CD4-positive, alpha-beta memory T cell (primary cell): ENCODE measurements at regions of chr2 and their contacts with region 1.

Region 1: DNA sequence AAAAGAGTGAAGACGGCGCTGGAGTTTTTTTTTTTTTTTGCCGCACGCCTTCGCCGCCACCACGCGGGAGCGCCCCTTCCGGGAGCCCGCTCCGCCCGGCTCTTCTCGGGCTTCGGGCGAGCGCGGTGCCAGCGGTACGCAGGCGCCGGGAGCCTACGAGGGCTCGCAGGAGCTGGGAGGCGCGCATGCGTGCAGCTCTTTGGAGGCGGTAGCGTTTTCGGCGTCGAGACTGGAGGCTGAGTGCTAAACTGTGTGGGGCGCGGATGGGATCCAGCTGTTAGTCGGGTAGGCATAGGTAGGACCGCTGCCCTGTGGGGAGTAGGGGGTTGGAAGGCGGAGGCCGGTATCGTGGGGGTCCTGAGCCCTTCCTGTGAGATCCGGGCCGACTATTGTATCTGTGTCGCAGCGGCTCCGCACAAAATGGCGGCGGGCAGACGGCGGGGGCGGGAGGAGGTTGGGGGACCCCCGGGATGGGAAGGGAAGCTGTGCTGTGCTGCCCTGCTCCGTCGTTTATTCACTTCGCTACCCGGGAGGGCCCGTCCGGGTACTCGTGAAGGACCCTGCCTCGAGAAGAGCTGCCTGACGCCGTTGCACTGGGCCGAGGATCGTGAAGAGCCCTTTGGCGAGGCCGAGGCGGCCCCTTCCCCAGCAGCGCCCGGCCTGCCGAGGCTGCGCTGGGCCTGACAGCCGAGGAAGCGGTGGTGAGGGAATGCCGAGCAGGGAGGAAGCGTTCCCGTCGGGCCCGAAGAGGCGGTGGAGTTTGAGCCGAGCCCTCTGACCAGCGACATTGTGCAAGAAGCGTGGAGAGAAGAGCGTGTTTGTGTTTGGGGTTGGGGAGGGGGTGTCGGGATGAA is at the start of gene ZNF638:
- DNase-seq: peak; percentile 92 to 94 (median 93)
- H3K4me3 ChIP-seq: peak within 1 kb of the TSS; percentile 70 to 76
- H3K4me3 Mint-ChIP-seq: peak within 1 kb of the TSS; percentile 98 to 100 (median 100)
- H3K27ac ChIP-seq: peak within 1 kb of the TSS; percentile 95
- H3K27ac Mint-ChIP-seq: peak within 1 kb of the TSS; percentile 98 to 100 (median 100)
- H3K4me1 ChIP-seq: peaks cover 51% of the 10 kb centered on the region
- H3K4me1 Mint-ChIP-seq: peaks cover 23 to 53% (median 35%) of the 10 kb centered on the region in 4 donors
- H3K27me3 ChIP-seq: no peaks in the 10 kb centered on the region
- H3K27me3 Mint-ChIP-seq: no peaks in the 10 kb centered on the region
- total RNA-seq, gene ZNF638: 167 TPM

Region 2: GRCh38 chr2:70690846-70691245 is 641.0 kb before region 1 on chr2:
- CTCF ChIA-PET with region 1: no interaction called
- POLR2A ChIA-PET with region 1: no interaction called
- intact Hi-C with region 1: no loop called
- DNase-seq: no peak
- H3K4me3 ChIP-seq: no peak overlapping the region
- H3K4me3 Mint-ChIP-seq: no peak overlapping the region
- H3K27ac ChIP-seq: no peak overlapping the region
- H3K27ac Mint-ChIP-seq: no peak overlapping the region
- H3K4me1 ChIP-seq: no peaks in the 10 kb centered on the region
- H3K4me1 Mint-ChIP-seq: no peaks in the 10 kb centered on the region
- H3K27me3 ChIP-seq: no peaks in the 10 kb centered on the region
- H3K27me3 Mint-ChIP-seq: peaks cover 7 to 17% of the 10 kb centered on the region in 2 donors

Region 3: DNA sequence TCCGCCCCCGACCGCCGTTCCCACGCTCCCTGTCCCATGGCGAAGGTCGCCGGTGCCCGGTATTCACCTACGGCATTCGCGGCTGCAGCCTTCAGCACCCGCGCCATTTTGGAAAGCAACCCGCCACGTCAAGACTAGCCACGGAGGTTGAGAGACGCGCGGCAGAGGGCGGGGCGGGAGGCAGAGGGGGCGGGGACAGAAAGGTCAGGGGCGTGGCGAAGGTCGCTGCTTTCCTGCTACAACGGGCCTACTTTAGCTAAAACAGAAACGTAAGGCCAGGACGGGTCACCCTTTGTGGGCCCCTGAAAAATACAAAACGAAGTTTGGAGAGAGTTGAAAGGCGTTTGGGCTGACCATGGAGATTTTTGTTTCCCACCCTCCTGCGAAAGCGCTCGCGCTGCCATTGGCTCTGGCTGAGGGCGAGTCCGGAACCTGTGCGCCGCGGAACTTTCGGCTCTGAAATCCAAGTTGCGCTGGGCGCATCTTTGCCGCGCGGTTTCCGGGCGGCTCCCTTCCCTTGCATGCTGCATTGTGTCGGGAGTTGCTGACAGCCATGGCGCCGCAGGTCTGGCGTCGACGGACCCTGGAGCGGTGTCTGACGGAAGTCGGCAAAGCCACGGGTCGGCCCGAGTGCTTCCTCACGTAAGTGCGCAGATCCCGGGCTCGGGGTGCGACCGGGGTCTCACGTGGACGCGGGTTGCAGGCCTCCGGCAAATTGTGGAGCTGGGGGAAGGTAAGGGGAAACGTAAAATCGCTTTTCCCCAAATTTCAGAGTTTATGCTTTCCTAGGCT is 201.5 kb before region 1 on chr2 and contains the starts of genes MCEE and MPHOSPH10:
- CTCF ChIA-PET with region 1: no interaction called
- POLR2A ChIA-PET with region 1: interaction called, 16 read pairs
- intact Hi-C with region 1: loop called (anchors 1 kb)
- DNase-seq: peak; percentile 88 to 92 (median 90)
- H3K4me3 ChIP-seq: peak within 1 kb of the TSS; percentile 88 to 91
- H3K4me3 Mint-ChIP-seq: no peak within 1 kb of the TSS
- H3K27ac ChIP-seq: peak within 1 kb of the TSS; percentile 77
- H3K27ac Mint-ChIP-seq: no peak within 1 kb of the TSS
- H3K4me1 ChIP-seq: peaks cover 38% of the 10 kb centered on the region
- H3K4me1 Mint-ChIP-seq: peaks cover 11 to 22% (median 15%) of the 10 kb centered on the region in 4 donors
- H3K27me3 ChIP-seq: no peaks in the 10 kb centered on the region
- H3K27me3 Mint-ChIP-seq: no peaks in the 10 kb centered on the region
- total RNA-seq, gene MCEE: 27.1 to 30.0 TPM
- total RNA-seq, gene MPHOSPH10: 50.6 to 54.2 TPM

Region 4: DNA sequence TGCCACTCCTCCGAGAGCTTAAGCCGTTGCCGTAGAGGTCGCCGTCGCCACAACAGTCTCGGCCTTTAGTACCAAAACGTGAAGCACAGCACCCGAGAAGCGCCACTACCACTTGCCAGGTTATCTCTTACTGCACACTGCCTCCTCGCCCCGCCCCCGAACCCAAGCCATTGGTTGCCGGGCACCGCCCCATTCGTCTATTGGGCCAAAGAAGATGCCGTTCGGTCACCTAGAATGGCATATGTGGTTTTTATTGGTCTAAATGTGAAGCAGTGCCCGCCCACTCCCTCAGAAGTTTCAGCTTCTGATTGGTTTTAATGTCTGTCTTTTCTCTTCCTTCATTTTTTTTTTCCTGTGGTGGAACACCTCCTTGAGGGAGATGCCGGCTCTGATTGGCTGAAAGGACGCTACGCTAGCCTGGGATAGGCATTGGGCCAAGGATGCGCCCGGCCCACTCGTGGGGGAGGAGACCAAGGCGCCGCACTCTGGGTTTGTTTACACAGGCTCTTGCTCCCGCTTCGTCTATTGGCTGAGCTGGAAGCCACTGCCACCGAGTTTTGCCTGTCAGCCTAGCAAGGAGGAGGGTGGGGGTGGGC is 104.7 kb before region 1 on chr2 and contains the start of gene PAIP2B:
- CTCF ChIA-PET with region 1: interaction called, 15 read pairs
- POLR2A ChIA-PET with region 1: interaction called, 23 read pairs
- intact Hi-C with region 1: loop called (anchors 1 kb)
- DNase-seq: peak; percentile 97 to 99 (median 99)
- H3K4me3 ChIP-seq: peak within 1 kb of the TSS; percentile 68 to 71
- H3K4me3 Mint-ChIP-seq: peak within 1 kb of the TSS; percentile 92 to 99 (median 98)
- H3K27ac ChIP-seq: peak within 1 kb of the TSS; percentile 53
- H3K27ac Mint-ChIP-seq: peak within 1 kb of the TSS; percentile 89 to 99 (median 96)
- H3K4me1 ChIP-seq: peaks cover 12% of the 10 kb centered on the region
- H3K4me1 Mint-ChIP-seq: peaks cover 16 to 33% (median 20%) of the 10 kb centered on the region in 4 donors
- H3K27me3 ChIP-seq: no peaks in the 10 kb centered on the region
- H3K27me3 Mint-ChIP-seq: peaks cover 6 to 10% of the 10 kb centered on the region in 2 donors
- total RNA-seq, gene PAIP2B: 9.9 to 11.0 TPM

Region 5: DNA sequence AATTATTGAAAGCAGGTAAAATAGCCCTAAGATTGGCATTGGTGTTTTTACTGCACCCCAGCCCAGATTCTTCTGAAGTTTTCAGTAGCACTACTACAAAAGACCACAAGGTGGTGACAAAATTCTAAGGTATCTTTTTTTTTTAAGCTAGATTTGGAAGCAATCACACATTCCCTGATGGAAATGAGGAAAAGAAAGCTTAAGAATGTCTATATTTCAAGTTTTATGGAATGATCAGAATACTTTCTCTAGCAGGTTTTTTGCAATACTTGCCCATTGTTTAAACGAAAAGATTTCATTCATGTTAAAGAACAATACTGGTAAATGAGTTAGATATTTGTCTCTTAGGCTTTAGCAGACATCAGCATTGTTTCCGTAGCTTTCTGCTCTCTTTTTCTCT is 32.3 kb before region 1 on chr2:
- CTCF ChIA-PET with region 1: interaction called, 52 read pairs
- POLR2A ChIA-PET with region 1: interaction called, 10 read pairs
- intact Hi-C with region 1: loop called (anchors 1 kb)
- DNase-seq: peak in 4 of 5 donors; percentile 30 to 40 (median 34)
- H3K4me3 ChIP-seq: no peak overlapping the region
- H3K4me3 Mint-ChIP-seq: no peak overlapping the region
- H3K27ac ChIP-seq: no peak overlapping the region
- H3K27ac Mint-ChIP-seq: no peak overlapping the region
- H3K4me1 ChIP-seq: no peaks in the 10 kb centered on the region
- H3K4me1 Mint-ChIP-seq: no peaks in the 10 kb centered on the region
- H3K27me3 ChIP-seq: no peaks in the 10 kb centered on the region
- H3K27me3 Mint-ChIP-seq: peaks cover 3 to 9% of the 10 kb centered on the region in 2 donors

Region 6: GRCh38 chr2:71348302-71348701 is 16.5 kb after region 1 on chr2:
- CTCF ChIA-PET with region 1: interaction called, 29 read pairs
- POLR2A ChIA-PET with region 1: interaction called, 9 read pairs
- intact Hi-C with region 1: loop called (anchors 2 kb)
- DNase-seq: peak in 1 of 5 donors; percentile 11
- H3K4me3 ChIP-seq: no peak overlapping the region
- H3K4me3 Mint-ChIP-seq: no peak overlapping the region
- H3K27ac ChIP-seq: no peak overlapping the region
- H3K27ac Mint-ChIP-seq: no peak overlapping the region
- H3K4me1 ChIP-seq: peaks cover 36% of the 10 kb centered on the region
- H3K4me1 Mint-ChIP-seq: peaks cover 46 to 84% (median 68%) of the 10 kb centered on the region in 4 donors
- H3K27me3 ChIP-seq: no peaks in the 10 kb centered on the region
- H3K27me3 Mint-ChIP-seq: no peaks in the 10 kb centered on the region

Region 7: DNA sequence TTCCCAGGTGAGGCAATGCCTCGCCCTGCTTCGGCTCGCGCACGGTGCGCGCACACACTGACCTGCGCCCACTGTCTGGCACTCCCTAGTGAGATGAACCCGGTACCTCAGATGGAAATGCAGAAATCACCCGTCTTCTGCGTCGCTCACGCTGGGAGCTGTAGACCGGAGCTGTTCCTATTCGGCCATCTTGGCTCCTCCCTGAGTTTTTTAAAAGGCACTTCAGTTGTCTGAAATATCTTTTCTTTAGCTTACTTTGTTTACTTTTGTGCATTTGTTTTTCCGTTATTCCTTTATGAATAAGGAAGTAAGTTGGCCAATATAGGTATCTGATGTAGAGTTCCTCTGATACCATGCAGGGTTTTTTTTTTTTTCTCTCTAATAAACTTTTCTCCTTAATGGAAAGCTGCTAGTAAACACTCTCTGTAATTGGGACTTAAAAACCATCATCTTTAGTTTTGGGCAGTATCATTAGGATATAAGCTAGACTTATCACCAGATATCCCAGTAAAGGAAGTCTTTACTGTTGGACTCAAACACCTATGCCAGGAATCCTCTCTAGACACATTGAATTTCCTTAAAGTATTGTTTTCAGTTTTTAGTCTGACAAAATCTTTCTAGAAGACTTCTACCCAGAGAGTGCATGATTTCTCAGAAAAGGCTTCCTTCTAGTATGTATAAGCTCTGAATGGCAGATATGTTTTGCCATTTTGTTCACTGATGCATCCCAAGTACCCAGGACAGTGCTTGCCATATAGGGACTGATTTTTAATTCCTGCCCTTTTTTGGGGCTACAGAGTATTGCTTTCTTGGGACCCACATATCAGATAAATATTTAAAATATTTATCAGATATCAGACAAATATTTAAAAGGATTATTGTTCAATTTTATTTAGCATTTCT is 85.7 kb after region 1 on chr2:
- CTCF ChIA-PET with region 1: interaction called, 11 read pairs
- POLR2A ChIA-PET with region 1: interaction called, 15 read pairs
- intact Hi-C with region 1: no loop called
- DNase-seq: peak in 2 of 5 donors; percentile 20 to 25
- H3K4me3 ChIP-seq: peak overlapping the region; percentile 15 to 17
- H3K4me3 Mint-ChIP-seq: peak overlapping the region; percentile 86 to 94 (median 90)
- H3K27ac ChIP-seq: peak overlapping the region; percentile 55
- H3K27ac Mint-ChIP-seq: peak overlapping the region; percentile 72 to 95 (median 94)
- H3K4me1 ChIP-seq: peaks cover 17% of the 10 kb centered on the region
- H3K4me1 Mint-ChIP-seq: peaks cover 8 to 16% (median 11%) of the 10 kb centered on the region in 4 donors
- H3K27me3 ChIP-seq: no peaks in the 10 kb centered on the region
- H3K27me3 Mint-ChIP-seq: no peaks in the 10 kb centered on the region

Region 8: DNA sequence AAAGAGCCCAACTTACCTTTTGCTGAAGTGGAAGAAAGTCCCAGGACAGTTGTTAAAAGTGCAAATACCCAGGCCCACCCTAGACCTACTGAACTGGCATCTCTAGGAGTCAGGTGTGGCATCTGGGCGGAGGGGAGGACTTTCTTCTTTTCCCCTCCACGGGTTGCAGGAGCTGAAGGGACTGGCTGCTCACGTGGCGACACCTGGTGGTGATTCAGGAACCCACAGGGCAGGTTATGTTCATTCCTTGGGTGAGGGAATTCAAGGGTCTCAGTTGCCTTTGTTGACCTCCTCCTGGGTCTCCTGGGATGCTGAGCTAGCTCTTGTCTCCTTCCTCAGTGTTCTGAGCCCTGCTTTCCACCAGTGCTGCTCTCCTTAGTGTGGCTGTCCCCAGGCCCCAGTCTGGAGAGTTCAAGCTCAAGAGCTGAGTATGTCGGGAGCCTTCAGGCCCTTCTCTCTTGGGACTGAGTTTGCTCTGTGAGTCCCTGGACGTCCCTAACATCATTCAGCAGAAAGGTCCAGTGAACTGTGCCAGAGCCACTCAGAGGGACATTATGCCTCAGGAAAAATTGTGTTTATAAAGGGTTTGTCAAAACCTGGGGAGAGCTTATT is 178.5 kb after region 1 on chr2:
- CTCF ChIA-PET with region 1: interaction called, 15 read pairs
- POLR2A ChIA-PET with region 1: no interaction called
- intact Hi-C with region 1: no loop called
- DNase-seq: peak; percentile 57 to 69 (median 64)
- H3K4me3 ChIP-seq: no peak overlapping the region
- H3K4me3 Mint-ChIP-seq: no peak overlapping the region
- H3K27ac ChIP-seq: no peak overlapping the region
- H3K27ac Mint-ChIP-seq: no peak overlapping the region
- H3K4me1 ChIP-seq: no peaks in the 10 kb centered on the region
- H3K4me1 Mint-ChIP-seq: peaks cover 0 to 2% (median 1%) of the 10 kb centered on the region in 4 donors
- H3K27me3 ChIP-seq: no peaks in the 10 kb centered on the region
- H3K27me3 Mint-ChIP-seq: peaks cover 2 to 7% of the 10 kb centered on the region in 2 donors

Region 9: GRCh38 chr2:71798266-71799012 is 466.6 kb after region 1 on chr2:
- CTCF ChIA-PET with region 1: no interaction called
- POLR2A ChIA-PET with region 1: no interaction called
- intact Hi-C with region 1: no loop called
- DNase-seq: no peak
- H3K4me3 ChIP-seq: no peak overlapping the region
- H3K4me3 Mint-ChIP-seq: no peak overlapping the region
- H3K27ac ChIP-seq: no peak overlapping the region
- H3K27ac Mint-ChIP-seq: peak overlapping the region in 1 of 7 donors; percentile 2
- H3K4me1 ChIP-seq: no peaks in the 10 kb centered on the region
- H3K4me1 Mint-ChIP-seq: no peaks in the 10 kb centered on the region
- H3K27me3 ChIP-seq: no peaks in the 10 kb centered on the region
- H3K27me3 Mint-ChIP-seq: peaks cover 2 to 4% of the 10 kb centered on the region in 2 donors